ENCODE measurements at regions of chr16 and their contacts with region 1.

Region 1: GRCh38 chr16:69709456-69710084 is 16.8 kb downstream of the NQO1 start:
- DNase-seq: peak in 2 of 9 experiments; percentile 66 to 78
- ATAC-seq: peak; percentile 55
- H3K4me3 ChIP-seq: no peak overlapping the region
- H3K4me3 Mint-ChIP-seq: no peak overlapping the region
- H3K27ac ChIP-seq: no peak overlapping the region
- H3K27ac Mint-ChIP-seq: no peak overlapping the region
- H3K4me1 ChIP-seq: no peaks in the 10 kb centered on the region
- H3K4me1 Mint-ChIP-seq: peaks cover 4% of the 10 kb centered on the region
- H3K27me3 ChIP-seq: no peaks in the 10 kb centered on the region
- H3K27me3 Mint-ChIP-seq: no peaks in the 10 kb centered on the region
- CTCF ChIP-seq: peak; percentile 87

Region 2: GRCh38 chr16:69693916-69694315 is 15.7 kb before region 1 on chr16:
- CTCF ChIA-PET with region 1: interaction called, 11 read pairs
- POLR2A ChIA-PET with region 1: no interaction called
- intact Hi-C with region 1: no loop called
- DNase-seq: no peak
- ATAC-seq: no peak
- H3K4me3 ChIP-seq: no peak overlapping the region
- H3K4me3 Mint-ChIP-seq: no peak overlapping the region
- H3K27ac ChIP-seq: no peak overlapping the region
- H3K27ac Mint-ChIP-seq: no peak overlapping the region
- H3K4me1 ChIP-seq: no peaks in the 10 kb centered on the region
- H3K4me1 Mint-ChIP-seq: no peaks in the 10 kb centered on the region
- H3K27me3 ChIP-seq: no peaks in the 10 kb centered on the region
- H3K27me3 Mint-ChIP-seq: no peaks in the 10 kb centered on the region
- CTCF ChIP-seq: no peak

Region 3: DNA sequence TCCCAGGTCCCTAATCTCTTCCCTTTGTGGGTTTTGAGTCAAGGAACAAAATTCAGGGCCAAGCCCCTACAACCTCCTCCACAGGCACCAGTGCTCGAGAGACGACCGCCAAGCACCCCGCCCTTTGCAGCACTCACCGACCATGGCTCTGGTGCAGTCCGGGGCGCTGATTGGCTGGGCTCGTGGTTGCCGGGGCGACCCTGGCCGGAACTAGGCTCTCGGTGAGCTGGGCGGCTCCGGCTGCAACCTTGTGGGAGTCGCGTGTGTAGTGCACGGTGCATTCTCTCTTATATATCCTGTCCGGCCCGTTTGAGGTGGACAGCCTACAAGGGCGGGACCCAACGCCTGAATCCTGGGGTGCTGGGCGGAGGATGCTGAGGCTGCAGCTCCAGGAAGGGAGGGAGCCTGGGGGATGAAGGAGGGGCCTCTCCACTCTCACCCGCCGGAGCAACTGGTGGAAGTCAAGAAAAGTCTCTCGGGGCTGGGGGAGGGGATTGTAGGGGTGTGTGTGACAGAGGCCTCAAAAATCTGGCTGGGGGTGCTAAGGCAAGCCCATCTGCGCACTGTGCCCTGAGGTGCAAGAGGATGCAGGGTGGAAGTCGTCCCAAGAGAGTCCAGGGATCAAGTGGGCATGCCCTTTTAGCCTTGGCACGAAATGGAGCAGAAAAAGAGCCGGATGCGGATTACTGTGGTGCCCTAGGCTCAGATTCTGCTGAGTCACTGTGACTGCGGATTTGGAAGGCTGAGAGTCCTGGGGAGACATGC is 16.9 kb after region 1 on chr16 and contains the start of gene NQO1:
- CTCF ChIA-PET with region 1: interaction called, 11 read pairs
- POLR2A ChIA-PET with region 1: interaction called, 4 read pairs
- intact Hi-C with region 1: loop called in 1 of 2 experiments (anchors 2 kb)
- DNase-seq: peak; percentile 66 to 95 (median 85)
- ATAC-seq: peak; percentile 97
- H3K4me3 ChIP-seq: peak within 1 kb of the TSS; percentile 63 to 85
- H3K4me3 Mint-ChIP-seq: peak within 1 kb of the TSS; percentile 91
- H3K27ac ChIP-seq: peak within 1 kb of the TSS; percentile 54 to 67
- H3K27ac Mint-ChIP-seq: peak within 1 kb of the TSS; percentile 87
- H3K4me1 ChIP-seq: peaks cover 20% of the 10 kb centered on the region
- H3K4me1 Mint-ChIP-seq: peaks cover 23% of the 10 kb centered on the region
- H3K27me3 ChIP-seq: no peaks in the 10 kb centered on the region
- H3K27me3 Mint-ChIP-seq: no peaks in the 10 kb centered on the region
- CTCF ChIP-seq: no peak
- total RNA-seq, gene NQO1: 0.27 to 0.28 TPM

Region 4: DNA sequence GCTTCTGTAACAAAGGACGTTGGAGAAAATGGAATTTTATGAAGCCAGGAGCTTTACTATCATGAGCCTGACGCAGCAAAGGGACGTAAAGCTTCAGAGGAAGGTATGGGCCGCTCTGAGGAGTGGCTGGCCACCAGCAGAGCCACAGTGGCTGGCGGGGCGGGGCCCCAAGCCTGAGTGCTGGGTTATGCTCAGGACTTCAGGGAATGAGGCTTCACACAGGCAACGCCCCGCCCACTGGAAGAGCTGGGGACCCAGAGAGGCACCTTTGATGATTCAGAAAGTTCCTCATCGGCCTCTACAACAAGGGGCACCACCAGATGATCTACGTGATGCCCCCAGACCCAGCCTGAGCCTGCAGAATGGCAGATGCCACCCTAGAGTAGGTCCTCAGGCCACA is 36.4 kb after region 1 on chr16:
- CTCF ChIA-PET with region 1: interaction called, 11 read pairs
- POLR2A ChIA-PET with region 1: interaction called, 3 read pairs
- intact Hi-C with region 1: no loop called
- DNase-seq: no peak
- ATAC-seq: no peak
- H3K4me3 ChIP-seq: no peak overlapping the region
- H3K4me3 Mint-ChIP-seq: no peak overlapping the region
- H3K27ac ChIP-seq: no peak overlapping the region
- H3K27ac Mint-ChIP-seq: no peak overlapping the region
- H3K4me1 ChIP-seq: no peaks in the 10 kb centered on the region
- H3K4me1 Mint-ChIP-seq: peaks cover 4% of the 10 kb centered on the region
- H3K27me3 ChIP-seq: no peaks in the 10 kb centered on the region
- H3K27me3 Mint-ChIP-seq: no peaks in the 10 kb centered on the region
- CTCF ChIP-seq: no peak

Region 5: GRCh38 chr16:69754469-69755310 is 45.1 kb after region 1 on chr16 and contains the start of gene NOB1:
- CTCF ChIA-PET with region 1: interaction called, 88 read pairs
- POLR2A ChIA-PET with region 1: interaction called, 17 read pairs
- intact Hi-C with region 1: loop called (anchors 1 kb)
- DNase-seq: peak; percentile 94 to 100 (median 98)
- ATAC-seq: peak; percentile 97
- H3K4me3 ChIP-seq: peak within 1 kb of the TSS; percentile 91 to 100
- H3K4me3 Mint-ChIP-seq: peak within 1 kb of the TSS; percentile 100
- H3K27ac ChIP-seq: peak within 1 kb of the TSS; percentile 78 to 84
- H3K27ac Mint-ChIP-seq: peak within 1 kb of the TSS; percentile 98
- H3K4me1 ChIP-seq: peaks cover 9% of the 10 kb centered on the region
- H3K4me1 Mint-ChIP-seq: peaks cover 29% of the 10 kb centered on the region
- H3K27me3 ChIP-seq: no peaks in the 10 kb centered on the region
- H3K27me3 Mint-ChIP-seq: no peaks in the 10 kb centered on the region
- CTCF ChIP-seq: peak; percentile 79
- total RNA-seq, gene NOB1: 46.4 to 48.0 TPM

Region 6: GRCh38 chr16:69761983-69762813 is 52.6 kb after region 1 on chr16 and contains the start of gene WWP2:
- CTCF ChIA-PET with region 1: interaction called, 88 read pairs
- POLR2A ChIA-PET with region 1: no interaction called
- intact Hi-C with region 1: loop called in 1 of 2 experiments (anchors 2 kb)
- DNase-seq: peak; percentile 54 to 92 (median 77)
- ATAC-seq: peak; percentile 81
- H3K4me3 ChIP-seq: peak within 1 kb of the TSS; percentile 91 to 100
- H3K4me3 Mint-ChIP-seq: peak within 1 kb of the TSS; percentile 94
- H3K27ac ChIP-seq: peak within 1 kb of the TSS; percentile 97 to 99
- H3K27ac Mint-ChIP-seq: peak within 1 kb of the TSS; percentile 98
- H3K4me1 ChIP-seq: peaks cover 17% of the 10 kb centered on the region
- H3K4me1 Mint-ChIP-seq: peaks cover 31% of the 10 kb centered on the region
- H3K27me3 ChIP-seq: no peaks in the 10 kb centered on the region
- H3K27me3 Mint-ChIP-seq: no peaks in the 10 kb centered on the region
- CTCF ChIP-seq: no peak
- total RNA-seq, gene WWP2: 36.7 to 36.9 TPM

Region 7: GRCh38 chr16:69930117-69930776 is 220.7 kb after region 1 on chr16:
- CTCF ChIA-PET with region 1: interaction called, 5 read pairs
- POLR2A ChIA-PET with region 1: no interaction called
- intact Hi-C with region 1: loop called in 1 of 2 experiments (anchors 1 kb)
- DNase-seq: peak in 7 of 9 experiments; percentile 29 to 69 (median 52)
- ATAC-seq: peak; percentile 71
- H3K4me3 ChIP-seq: no peak overlapping the region
- H3K4me3 Mint-ChIP-seq: no peak overlapping the region
- H3K27ac ChIP-seq: no peak overlapping the region
- H3K27ac Mint-ChIP-seq: no peak overlapping the region
- H3K4me1 ChIP-seq: no peaks in the 10 kb centered on the region
- H3K4me1 Mint-ChIP-seq: no peaks in the 10 kb centered on the region
- H3K27me3 ChIP-seq: no peaks in the 10 kb centered on the region
- H3K27me3 Mint-ChIP-seq: no peaks in the 10 kb centered on the region
- CTCF ChIP-seq: peak; percentile 70

Region 8: DNA sequence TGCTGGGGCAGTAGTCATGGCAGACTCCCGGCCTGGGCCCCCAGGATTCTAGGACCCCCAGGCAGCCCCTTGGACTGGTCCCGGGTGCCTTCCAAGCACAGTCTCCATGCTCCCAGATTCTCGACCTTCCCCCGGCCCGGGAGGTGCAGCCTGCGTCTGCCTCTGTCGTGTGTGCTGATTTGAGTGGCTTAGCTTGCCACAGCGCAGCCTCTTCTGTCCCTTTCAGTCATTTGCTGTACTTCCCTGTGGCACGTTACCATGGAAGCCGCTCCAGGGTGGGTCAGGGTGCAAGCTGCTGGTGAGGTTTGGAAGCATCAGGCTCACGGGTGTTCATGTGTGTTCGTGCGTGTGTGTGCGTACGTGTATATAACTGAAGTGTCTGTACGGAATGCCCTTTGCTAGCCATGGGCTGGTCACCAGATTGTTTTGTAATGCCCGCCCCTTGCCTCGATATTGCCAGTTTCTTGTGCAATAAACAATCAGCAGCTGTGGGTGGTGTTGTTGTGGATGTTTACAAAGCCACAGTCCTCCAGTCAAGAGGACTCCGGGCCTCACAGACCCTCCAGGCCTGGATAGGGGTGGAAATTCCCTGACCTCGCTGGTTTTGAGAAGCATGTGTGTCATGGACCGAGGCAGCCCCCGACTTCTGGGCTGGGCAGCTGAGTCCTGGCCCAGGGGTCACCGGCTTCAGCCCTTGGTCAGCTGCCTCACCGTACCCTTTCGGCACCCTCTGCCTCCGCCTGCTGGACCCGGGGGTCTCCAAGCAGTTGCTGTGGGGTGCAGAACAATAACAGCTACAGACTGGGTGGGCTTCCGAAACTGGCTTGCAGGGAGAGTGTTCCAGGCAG is 231.9 kb after region 1 on chr16:
- CTCF ChIA-PET with region 1: no interaction called
- POLR2A ChIA-PET with region 1: no interaction called
- intact Hi-C with region 1: no loop called
- DNase-seq: no peak
- ATAC-seq: no peak
- H3K4me3 ChIP-seq: no peak overlapping the region
- H3K4me3 Mint-ChIP-seq: no peak overlapping the region
- H3K27ac ChIP-seq: no peak overlapping the region
- H3K27ac Mint-ChIP-seq: no peak overlapping the region
- H3K4me1 ChIP-seq: no peaks in the 10 kb centered on the region
- H3K4me1 Mint-ChIP-seq: no peaks in the 10 kb centered on the region
- H3K27me3 ChIP-seq: no peaks in the 10 kb centered on the region
- H3K27me3 Mint-ChIP-seq: no peaks in the 10 kb centered on the region
- CTCF ChIP-seq: no peak

Measured in CD8-positive, alpha-beta T cell (primary cell).